ENCODE measurements at regions of chr4 and their contacts with region 1.

Region 1: DNA sequence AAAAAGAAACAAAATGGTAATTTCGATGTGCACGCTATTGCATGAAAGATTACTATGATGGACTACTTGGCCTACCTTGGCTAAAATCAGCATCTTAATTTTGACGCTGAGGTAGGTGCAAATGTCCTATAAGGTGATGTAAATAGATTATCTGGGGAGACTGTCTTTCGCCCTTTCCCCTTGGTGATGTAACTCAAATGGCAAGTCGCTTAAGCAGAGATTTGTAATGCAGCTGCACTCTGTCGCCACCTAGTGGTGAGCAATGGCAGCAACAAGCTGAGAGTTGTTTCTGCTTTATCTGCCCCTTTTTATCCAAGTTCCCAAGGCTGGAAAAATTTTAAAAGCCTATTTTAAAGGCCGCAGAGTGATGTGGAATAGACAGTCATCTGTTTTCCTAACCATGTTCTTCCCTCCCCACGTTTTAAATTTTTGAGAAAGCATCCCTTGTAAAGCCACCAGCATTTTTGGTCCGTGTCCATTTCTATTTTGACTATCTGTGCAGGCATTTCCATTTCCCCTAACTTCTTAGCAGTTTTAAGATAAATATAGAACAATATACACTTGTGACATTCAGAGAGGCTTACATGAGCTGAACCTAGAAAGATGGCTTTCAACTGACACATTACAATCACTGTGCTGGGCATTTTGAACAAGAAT is 62.4 kb upstream of the PDLIM3 start:
- DNase-seq: peak; percentile 75
- ATAC-seq: peak; percentile 62
- H3K4me3 Mint-ChIP-seq: no peak overlapping the region
- H3K27ac Mint-ChIP-seq: no peak overlapping the region
- H3K4me1 Mint-ChIP-seq: peaks cover 8% of the 10 kb centered on the region
- H3K27me3 Mint-ChIP-seq: no peaks in the 10 kb centered on the region
- CTCF ChIP-seq: peak; percentile 98

Region 2: GRCh38 chr4:185471235-185472102 is 126.2 kb before region 1 on chr4 and contains the start of gene CCDC110:
- CTCF ChIA-PET with region 1: interaction called, 11 read pairs
- POLR2A ChIA-PET with region 1: no interaction called
- DNase-seq: peak; percentile 95
- ATAC-seq: peak; percentile 98
- H3K4me3 Mint-ChIP-seq: peak within 1 kb of the TSS; percentile 84
- H3K27ac Mint-ChIP-seq: no peak within 1 kb of the TSS
- H3K4me1 Mint-ChIP-seq: peaks cover 10% of the 10 kb centered on the region
- H3K27me3 Mint-ChIP-seq: peaks cover 58% of the 10 kb centered on the region
- CTCF ChIP-seq: peak; percentile 51
- total RNA-seq, gene CCDC110: 2.1 to 2.9 TPM (median 2.2 TPM) in 3 replicates

Region 3: GRCh38 chr4:185534866-185535611 is 62.6 kb before region 1 on chr4 and contains the start of gene PDLIM3:
- CTCF ChIA-PET with region 1: interaction called, 22 read pairs
- POLR2A ChIA-PET with region 1: no interaction called
- DNase-seq: peak; percentile 68
- ATAC-seq: peak; percentile 75
- H3K4me3 Mint-ChIP-seq: peak within 1 kb of the TSS; percentile 81
- H3K27ac Mint-ChIP-seq: peak within 1 kb of the TSS; percentile 6; the same call in 1 of the 2 replicates
- H3K4me1 Mint-ChIP-seq: peaks cover 10% of the 10 kb centered on the region
- H3K27me3 Mint-ChIP-seq: peaks cover 18% of the 10 kb centered on the region
- CTCF ChIP-seq: no peak
- total RNA-seq, gene PDLIM3: 6.2 to 7.0 TPM (median 6.9 TPM) in 3 replicates

Region 4: GRCh38 chr4:185608185-185608584 is 10.5 kb after region 1 on chr4:
- CTCF ChIA-PET with region 1: interaction called, 10 read pairs
- POLR2A ChIA-PET with region 1: no interaction called
- DNase-seq: no peak
- ATAC-seq: no peak
- H3K4me3 Mint-ChIP-seq: no peak overlapping the region
- H3K27ac Mint-ChIP-seq: no peak overlapping the region
- H3K4me1 Mint-ChIP-seq: no peaks in the 10 kb centered on the region
- H3K27me3 Mint-ChIP-seq: no peaks in the 10 kb centered on the region
- CTCF ChIP-seq: no peak

Region 5: DNA sequence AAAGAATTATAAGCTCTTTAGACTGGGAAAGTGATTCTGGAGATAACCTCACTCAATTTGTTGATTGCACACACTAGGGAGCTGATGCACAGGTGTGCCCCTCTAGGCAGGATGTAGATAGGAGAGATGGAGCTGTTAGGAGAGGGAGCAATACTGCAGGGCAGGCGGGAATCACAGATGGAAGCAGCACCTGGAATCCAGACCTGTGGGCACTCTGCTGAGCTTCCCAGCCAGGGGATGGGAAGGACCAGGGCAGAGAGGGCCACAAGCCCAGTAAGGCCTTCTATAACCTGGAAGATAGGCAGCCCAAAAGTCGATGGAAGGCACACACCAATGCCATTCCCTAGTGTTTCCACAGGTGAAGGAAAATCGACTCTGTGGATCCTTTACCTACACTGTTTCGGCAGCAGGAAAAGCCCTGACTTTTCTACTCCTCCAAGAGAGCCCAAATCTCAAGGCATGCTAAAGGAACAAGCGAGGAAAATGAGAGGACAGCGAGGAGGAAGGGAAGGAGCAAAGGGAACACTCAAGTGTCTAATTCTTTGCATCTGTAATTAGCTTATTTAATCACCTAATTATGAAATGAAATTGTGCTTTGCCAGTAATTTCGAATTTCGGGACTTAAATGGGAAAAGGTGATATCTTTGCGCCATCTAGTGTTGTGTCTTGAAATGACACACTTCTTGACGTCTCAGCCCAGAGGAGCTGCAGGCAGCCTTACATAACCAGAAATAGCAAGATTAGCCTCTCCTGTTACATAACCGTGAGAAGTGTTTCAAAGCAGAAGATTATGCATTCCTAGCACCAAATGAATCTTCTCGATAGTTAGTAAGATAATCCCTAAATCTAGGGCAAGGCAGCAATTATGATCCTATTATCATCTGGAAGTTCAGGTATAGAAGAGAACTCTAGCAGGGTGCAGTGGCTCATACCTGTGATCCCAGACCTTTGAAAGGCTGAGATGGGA is 440.3 kb after region 1 on chr4:
- CTCF ChIA-PET with region 1: interaction called, 14 read pairs
- POLR2A ChIA-PET with region 1: no interaction called
- DNase-seq: no peak
- ATAC-seq: peak; percentile 83
- H3K4me3 Mint-ChIP-seq: no peak overlapping the region
- H3K27ac Mint-ChIP-seq: 0 out of 2 replicates have a peak overlapping the region, but pooled peaks have one; percentile 60
- H3K4me1 Mint-ChIP-seq: peaks cover 9% of the 10 kb centered on the region; the same call in 1 of the 2 replicates
- H3K27me3 Mint-ChIP-seq: peaks cover 17% of the 10 kb centered on the region
- CTCF ChIP-seq: peak; percentile 81

Measured in WTC11 (cell line).